Left cardiac atrium (tissue), 4 donors: ENCODE measurements at regions of chr3 and their contacts with region 1.

Region 1: GRCh38 chr3:194682694-194683310 is 2.9 kb upstream of the FAM43A start:
- DNase-seq: peak; percentile 70
- ATAC-seq: peak; percentile 56 to 62

Region 2: GRCh38 chr3:194556086-194557056 is 126.4 kb before region 1 on chr3:
- intact Hi-C with region 1: no loop called
- DNase-seq: no peak
- ATAC-seq: no peak

Region 3: GRCh38 chr3:194773216-194773615 is 90.4 kb after region 1 on chr3:
- intact Hi-C with region 1: loop called in 1 of 2 experiments (anchors 5 kb)
- DNase-seq: peak; percentile 68
- ATAC-seq: peak in 1 of 2 donors; percentile 59

Region 4: GRCh38 chr3:194879991-194880939 is 197.5 kb after region 1 on chr3:
- intact Hi-C with region 1: loop called in 1 of 2 experiments (anchors 10 kb)
- DNase-seq: peak; percentile 84
- ATAC-seq: peak; percentile 85 to 87

Region 5: GRCh38 chr3:194952841-194953241 is 270.0 kb after region 1 on chr3:
- intact Hi-C with region 1: loop called (anchors 10 kb)
- DNase-seq: no peak
- ATAC-seq: peak; percentile 45 to 66

Region 6: DNA sequence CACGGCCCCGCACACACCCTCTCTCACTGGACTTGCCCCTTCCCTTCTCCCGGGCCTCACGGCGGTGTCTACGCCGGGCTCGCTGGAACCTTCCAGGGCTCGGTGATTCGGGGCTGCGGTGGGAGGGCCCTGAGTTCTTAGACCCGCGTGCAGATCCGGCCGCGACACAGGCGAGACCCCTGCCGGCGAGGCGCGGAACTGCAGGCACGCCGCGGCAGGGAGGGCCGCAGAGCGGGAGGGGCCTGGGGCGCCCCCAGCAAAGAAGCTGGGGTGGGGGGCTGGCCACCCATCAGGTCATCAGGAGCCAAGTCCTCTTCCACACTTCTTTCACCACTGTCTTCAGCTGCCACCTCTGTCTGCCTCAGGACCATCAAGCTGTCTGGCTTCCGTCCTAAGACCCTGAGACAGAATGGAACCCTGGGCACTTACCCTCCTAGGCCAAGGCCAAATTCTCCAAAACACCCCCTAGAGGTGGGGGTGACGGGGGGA is 423.7 kb after region 1 on chr3:
- intact Hi-C with region 1: loop called (anchors 1 to 5 kb)
- DNase-seq: peak; percentile 82
- ATAC-seq: peak; percentile 80 to 86

Region 7: GRCh38 chr3:195259475-195260279 is 576.9 kb after region 1 on chr3:
- intact Hi-C with region 1: loop called (anchors 2 to 5 kb)
- DNase-seq: peak; percentile 94
- ATAC-seq: peak; percentile 85 to 90